ENCODE measurements at regions of chr15 and their contacts with region 1.

Region 1: GRCh38 chr15:92881802-92882696 is 18.1 kb upstream of the CHD2 start:
- DNase-seq: peak; percentile 99
- ATAC-seq: peak; percentile 96
- H3K4me3 ChIP-seq: peak overlapping the region; percentile 59 to 67 (median 62)
- H3K27ac ChIP-seq: peak overlapping the region; percentile 90
- H3K4me1 ChIP-seq: peaks cover 56% of the 10 kb centered on the region
- H3K27me3 ChIP-seq: peaks cover 0 to 4% of the 10 kb centered on the region in 2 experiments; a peak in 1 of 5 replicates
- CTCF ChIP-seq: no peak
- EP300 ChIP-seq: no peak
- POLR2A ChIP-seq: peak; percentile 92 to 96
- RAD21 ChIP-seq: 0 out of 2 replicates have a peak, but pooled peaks have one; percentile 27

Region 2: GRCh38 chr15:92803847-92804609 is 78.0 kb before region 1 on chr15:
- CTCF ChIA-PET with region 1: no interaction called
- POLR2A ChIA-PET with region 1: interaction called, 211 read pairs
- in situ Hi-C with region 1: no loop called
- intact Hi-C with region 1: loop called (anchors 1 kb)
- DNase-seq: peak; percentile 100
- ATAC-seq: peak; percentile 90
- H3K4me3 ChIP-seq: peak overlapping the region in 1 of 3 experiments; percentile 18; a peak in 2 of 6 replicates
- H3K27ac ChIP-seq: peak overlapping the region; percentile 90
- H3K4me1 ChIP-seq: peaks cover 63% of the 10 kb centered on the region
- H3K27me3 ChIP-seq: no peaks in the 10 kb centered on the region; a peak in 1 of 5 replicates
- CTCF ChIP-seq: no peak
- EP300 ChIP-seq: peak; percentile 94 to 97
- POLR2A ChIP-seq: peak; percentile 27 to 48; a peak in 2 of 4 replicates
- RAD21 ChIP-seq: no peak

Region 3: DNA sequence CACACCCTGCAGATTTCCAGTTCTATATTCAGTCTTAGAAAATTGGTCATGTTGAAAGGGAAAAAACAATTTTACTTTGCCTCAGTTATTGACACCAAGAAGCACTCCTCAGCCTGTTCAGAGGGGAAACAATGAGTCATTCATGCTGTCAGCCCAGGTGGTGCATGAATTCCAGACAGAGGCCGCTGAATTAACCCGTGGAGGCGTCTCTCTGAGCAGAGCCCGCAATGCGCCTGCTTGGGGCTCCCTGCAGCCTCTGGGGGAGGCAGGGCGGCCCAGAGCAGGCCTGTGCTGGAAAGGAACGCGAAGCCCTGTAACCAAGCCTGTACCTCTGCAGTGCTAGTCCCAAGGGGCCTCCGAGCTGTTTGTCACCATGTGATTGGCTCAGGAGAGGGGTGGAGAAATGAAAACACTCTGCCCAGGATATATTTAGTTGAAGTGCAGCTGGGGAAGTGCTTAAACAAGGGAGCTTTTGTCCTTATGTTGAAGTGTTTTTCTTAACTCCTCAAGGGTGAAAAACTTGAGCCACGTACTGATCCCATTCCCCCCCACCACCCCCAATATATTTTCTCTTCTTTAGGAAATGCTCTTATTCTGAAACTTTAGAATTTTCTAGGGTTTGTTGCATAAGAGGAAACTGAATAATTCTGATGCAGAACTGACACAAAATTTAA is 50.3 kb before region 1 on chr15:
- CTCF ChIA-PET with region 1: no interaction called
- POLR2A ChIA-PET with region 1: interaction called, 132 read pairs
- in situ Hi-C with region 1: no loop called
- intact Hi-C with region 1: loop called (anchors 1 kb)
- DNase-seq: peak; percentile 98
- ATAC-seq: peak; percentile 100
- H3K4me3 ChIP-seq: peak overlapping the region; percentile 52 to 55 (median 54)
- H3K27ac ChIP-seq: peak overlapping the region; percentile 95
- H3K4me1 ChIP-seq: peaks cover 37% of the 10 kb centered on the region
- H3K27me3 ChIP-seq: no peaks in the 10 kb centered on the region
- CTCF ChIP-seq: peak; percentile 31
- EP300 ChIP-seq: peak; percentile 54 to 67; a peak in 3 of 4 replicates
- POLR2A ChIP-seq: peak; percentile 86 to 93
- RAD21 ChIP-seq: peak; percentile 69

Region 4: GRCh38 chr15:92868992-92869988 is 12.8 kb before region 1 on chr15:
- CTCF ChIA-PET with region 1: no interaction called
- POLR2A ChIA-PET with region 1: interaction called, 17 read pairs
- in situ Hi-C with region 1: no loop called
- intact Hi-C with region 1: loop called (anchors 1 kb)
- DNase-seq: peak; percentile 25
- ATAC-seq: peak; percentile 31
- H3K4me3 ChIP-seq: peak overlapping the region in 2 of 3 experiments; percentile 22 to 45; a peak in 2 of 6 replicates
- H3K27ac ChIP-seq: no peak overlapping the region
- H3K4me1 ChIP-seq: peaks cover 45% of the 10 kb centered on the region
- H3K27me3 ChIP-seq: no peaks in the 10 kb centered on the region; a peak in 1 of 5 replicates
- CTCF ChIP-seq: no peak
- EP300 ChIP-seq: no peak
- POLR2A ChIP-seq: no peak
- RAD21 ChIP-seq: no peak

Region 5: DNA sequence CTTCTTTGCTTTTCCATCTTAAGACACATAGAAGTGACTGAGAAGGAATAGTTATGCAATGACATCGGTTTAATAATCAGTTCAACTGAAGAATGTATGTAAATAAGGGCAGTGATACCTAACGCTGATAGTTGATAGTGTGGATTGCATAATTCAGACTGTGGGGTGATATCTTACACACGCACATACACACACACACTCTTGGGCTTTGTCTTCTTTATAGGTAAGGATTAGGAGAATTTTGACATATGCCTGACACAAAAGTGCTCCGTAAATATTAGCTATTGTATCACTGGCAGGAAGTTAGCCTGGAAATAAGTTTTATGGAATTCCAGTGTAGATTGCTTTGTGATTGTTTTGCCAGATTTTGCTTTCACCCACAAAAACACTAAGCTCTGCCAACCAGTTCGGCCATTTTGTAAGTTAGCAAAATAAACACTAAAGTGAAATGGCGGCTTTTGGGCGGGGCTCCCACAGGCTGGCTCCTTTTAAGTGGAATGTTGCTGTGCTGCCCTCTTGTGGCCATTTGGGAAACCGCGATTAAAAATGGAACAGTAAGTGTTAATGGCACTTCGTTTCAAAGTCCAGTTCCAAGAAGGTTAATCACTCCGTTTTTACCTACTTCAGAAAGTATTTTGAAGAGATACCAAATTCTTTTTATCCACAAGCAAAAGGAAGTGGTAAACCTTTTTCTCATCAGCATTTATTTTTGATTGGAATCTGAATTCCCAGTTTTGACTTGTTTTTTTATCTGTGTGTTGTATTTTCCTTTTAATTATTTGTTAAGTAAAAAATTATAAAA is 35.8 kb after region 1 on chr15:
- CTCF ChIA-PET with region 1: no interaction called
- POLR2A ChIA-PET with region 1: interaction called, 10 read pairs
- in situ Hi-C with region 1: no loop called
- intact Hi-C with region 1: no loop called
- DNase-seq: peak; percentile 87
- ATAC-seq: peak; percentile 39
- H3K4me3 ChIP-seq: no peak overlapping the region
- H3K27ac ChIP-seq: peak overlapping the region; percentile 60
- H3K4me1 ChIP-seq: peaks cover 98% of the 10 kb centered on the region
- H3K27me3 ChIP-seq: no peaks in the 10 kb centered on the region
- CTCF ChIP-seq: peak; percentile 84
- EP300 ChIP-seq: no peak
- POLR2A ChIP-seq: no peak
- RAD21 ChIP-seq: peak; percentile 81